Psoas muscle (tissue), 8 donors: ENCODE measurements at regions of chr3 and their contacts with region 1.

Region 1: DNA sequence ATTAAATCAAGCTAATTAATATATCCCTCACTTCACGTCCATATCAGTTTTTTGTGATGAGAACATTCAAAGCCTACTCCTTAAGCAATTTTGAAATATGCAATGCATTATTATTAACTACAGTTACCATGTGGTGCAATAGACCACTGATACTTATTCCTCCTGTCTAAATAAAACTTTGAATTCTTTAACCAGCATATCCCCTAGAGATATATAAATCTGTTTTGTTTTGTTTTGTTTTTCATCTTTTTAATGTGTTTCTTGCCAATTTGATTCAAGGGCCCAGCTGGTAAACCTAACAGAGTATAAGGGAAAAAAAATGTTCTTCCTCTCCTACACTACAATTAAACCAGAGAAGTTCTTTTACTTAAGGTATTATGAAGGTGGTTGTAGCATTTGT is 524.2 kb downstream of the NAALADL2 start:
- DNase-seq: no peak
- ATAC-seq: no peak
- H3K4me3 ChIP-seq: no peak overlapping the region
- H3K27ac ChIP-seq: no peak overlapping the region
- H3K4me1 ChIP-seq: no peaks in the 10 kb centered on the region
- H3K27me3 ChIP-seq: no peaks in the 10 kb centered on the region
- CTCF ChIP-seq: no peak

Region 2: DNA sequence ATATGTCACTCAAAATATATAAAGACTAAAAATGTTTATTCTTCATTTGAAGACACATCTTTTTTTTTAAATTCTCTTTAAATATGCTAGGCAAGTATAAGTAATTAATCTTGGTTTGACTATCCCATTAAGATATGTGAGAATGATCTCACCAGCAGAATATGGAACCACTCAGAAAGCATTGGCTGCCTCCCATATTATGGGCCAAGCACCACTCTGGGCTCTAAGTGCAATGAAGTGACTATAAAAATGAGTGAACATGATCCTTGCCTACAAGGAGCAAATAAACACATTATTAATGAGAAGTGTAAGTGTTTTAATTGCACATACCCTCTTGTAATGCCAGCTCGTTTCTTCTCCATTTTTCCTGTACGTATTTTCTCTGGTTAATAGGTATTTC is 195.8 kb before region 1 on chr3:
- intact Hi-C with region 1: loop called in 1 of 2 experiments (anchors 5 kb)
- DNase-seq: no peak
- ATAC-seq: no peak
- H3K4me3 ChIP-seq: no peak overlapping the region
- H3K27ac ChIP-seq: no peak overlapping the region
- H3K4me1 ChIP-seq: no peaks in the 10 kb centered on the region
- H3K27me3 ChIP-seq: no peaks in the 10 kb centered on the region
- CTCF ChIP-seq: no peak

Region 3: GRCh38 chr3:175279457-175279856 is 103.9 kb before region 1 on chr3:
- intact Hi-C with region 1: no loop called
- DNase-seq: no peak
- ATAC-seq: no peak
- H3K4me3 ChIP-seq: no peak overlapping the region
- H3K27ac ChIP-seq: no peak overlapping the region
- H3K4me1 ChIP-seq: no peaks in the 10 kb centered on the region
- H3K27me3 ChIP-seq: no peaks in the 10 kb centered on the region
- CTCF ChIP-seq: no peak

Region 4: DNA sequence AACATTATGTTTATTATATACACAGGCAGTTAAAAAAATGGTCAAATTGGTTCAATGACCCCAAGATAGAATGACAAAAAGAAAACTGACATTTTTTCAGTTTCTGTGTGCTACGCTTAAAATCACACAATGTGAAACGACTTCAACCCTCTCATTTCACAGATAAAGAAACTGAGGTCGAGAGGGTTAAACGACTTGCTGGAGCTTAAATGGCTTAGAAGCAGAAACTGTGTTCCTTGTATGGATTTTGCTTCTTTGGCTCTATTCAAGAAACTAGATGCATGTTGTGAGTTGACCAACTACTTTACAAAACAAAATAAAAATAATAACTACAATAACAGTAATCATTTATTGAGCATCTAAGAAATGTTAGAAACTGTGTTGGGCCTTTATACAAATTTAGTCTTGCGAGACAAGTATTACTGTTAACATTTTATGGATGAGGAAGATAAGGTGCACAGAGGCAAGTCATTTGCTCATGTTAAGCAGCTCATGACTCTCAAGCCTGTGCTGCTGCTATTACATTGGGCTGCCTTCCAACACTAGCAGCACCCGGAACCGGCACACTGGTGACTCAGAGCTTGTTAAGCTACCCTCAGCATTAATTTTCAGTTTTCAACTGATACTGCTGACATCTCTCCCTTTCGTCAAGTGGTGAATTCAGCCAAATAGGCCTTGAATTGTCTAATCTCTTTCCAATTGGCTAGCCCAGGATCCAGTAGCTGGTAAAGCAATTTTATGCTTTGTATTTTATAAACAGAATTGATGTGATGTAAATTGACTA is 36.6 kb before region 1 on chr3:
- intact Hi-C with region 1: no loop called
- DNase-seq: peak; percentile 17 to 54
- ATAC-seq: peak in 3 of 4 donors; percentile 34 to 51 (median 44)
- H3K4me3 ChIP-seq: no peak overlapping the region
- H3K27ac ChIP-seq: no peak overlapping the region
- H3K4me1 ChIP-seq: no peaks in the 10 kb centered on the region
- H3K27me3 ChIP-seq: no peaks in the 10 kb centered on the region
- CTCF ChIP-seq: no peak